ENCODE measurements at regions of chr16 and their contacts with region 1.

Region 1: DNA sequence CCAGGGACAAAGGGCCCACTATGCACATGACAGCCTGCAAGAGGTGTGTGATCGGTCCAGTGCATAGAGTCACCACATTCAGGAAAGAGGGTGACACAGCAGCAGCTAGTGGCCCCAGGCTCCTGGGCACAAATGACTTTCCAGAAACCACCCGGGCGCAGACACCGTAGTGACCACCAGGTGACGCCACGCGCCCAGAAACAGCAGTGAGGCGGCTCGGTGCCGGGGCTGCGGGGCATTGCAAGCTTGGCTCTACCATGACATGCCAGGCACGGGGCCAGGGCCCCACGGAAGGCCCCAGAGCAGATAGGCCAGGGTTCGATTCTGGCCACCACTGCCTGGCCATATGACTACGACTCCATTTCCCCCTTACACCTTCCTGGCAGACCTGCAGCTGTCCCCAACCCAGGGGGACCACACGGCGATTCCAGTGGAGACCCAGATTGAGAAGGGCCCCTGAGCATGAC is 6.7 kb downstream of the RHBDF1 start:
- DNase-seq: peak; percentile 91
- ATAC-seq: peak; percentile 69

Region 2: DNA sequence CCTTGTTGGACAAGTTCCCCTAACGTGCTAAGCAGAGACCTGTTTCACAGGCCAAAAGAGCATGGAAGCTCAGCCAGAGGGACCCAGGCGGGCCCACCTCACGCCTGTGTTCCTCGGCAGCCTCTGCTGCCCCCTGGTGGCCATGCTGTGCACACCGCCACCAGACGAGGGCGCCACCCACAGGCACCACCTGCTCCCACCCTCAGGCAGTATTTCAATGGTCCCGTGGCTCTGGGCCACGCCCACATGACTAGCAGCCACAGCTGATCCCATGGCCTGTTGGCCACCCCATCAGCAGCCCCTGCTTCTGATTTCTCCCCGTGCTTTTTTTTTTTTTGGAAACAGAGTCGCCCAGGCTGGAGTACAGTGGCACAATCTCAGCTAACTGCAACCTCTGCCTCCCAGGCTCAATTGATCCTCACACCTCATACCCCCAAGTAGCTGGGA is 31.3 kb after region 1 on chr16:
- intact Hi-C with region 1: loop called (anchors 2 kb)
- DNase-seq: peak; percentile 93
- ATAC-seq: peak; percentile 88